ENCODE measurements at regions of chr11 and their contacts with region 1.

Region 1: GRCh38 chr11:122781378-122782195 is 56.7 kb upstream of the CRTAM start:
- DNase-seq: peak; percentile 42
- H3K4me3 ChIP-seq: no peak overlapping the region
- H3K27ac ChIP-seq: no peak overlapping the region
- H3K4me1 ChIP-seq: peaks cover 0 to 28% (median 5%) of the 10 kb centered on the region in 3 donors
- H3K27me3 ChIP-seq: no peaks in the 10 kb centered on the region
- CTCF ChIP-seq: peak; percentile 91 to 96 (median 94)
- POLR2A ChIP-seq: no peak

Region 2: DNA sequence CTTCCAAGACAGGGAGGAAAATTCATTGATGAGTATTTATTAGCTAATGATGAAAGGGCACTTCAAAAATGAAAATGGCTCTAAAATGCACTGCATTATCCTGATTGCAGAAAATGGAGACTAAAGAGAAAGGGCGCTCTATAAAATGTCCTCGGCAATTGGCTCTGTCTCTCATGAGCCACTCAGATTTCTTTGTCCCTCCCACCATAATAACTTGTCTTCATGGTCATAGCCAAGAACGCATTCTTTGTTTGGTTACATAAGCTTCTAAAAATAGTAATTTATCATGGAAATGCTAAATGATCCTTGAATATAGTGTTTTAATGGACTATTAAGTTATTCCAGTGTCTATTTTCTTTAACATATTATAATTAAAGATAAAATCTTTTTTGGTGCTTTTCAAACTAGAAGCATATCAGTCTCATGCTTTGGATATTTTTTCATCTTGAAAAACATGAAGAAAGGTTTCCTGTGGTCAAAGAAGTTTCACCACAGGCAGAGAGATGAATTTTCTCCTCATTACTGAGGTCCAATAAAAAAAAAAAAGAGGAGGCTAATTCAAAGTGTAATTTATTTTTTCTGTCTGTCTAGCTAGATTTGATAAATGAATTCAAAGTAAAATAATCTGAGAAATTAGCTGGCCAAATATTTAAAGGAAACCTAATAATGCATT is 427.4 kb before region 1 on chr11:
- intact Hi-C with region 1: no loop called
- DNase-seq: no peak
- H3K4me3 ChIP-seq: no peak overlapping the region
- H3K27ac ChIP-seq: no peak overlapping the region
- H3K4me1 ChIP-seq: no peaks in the 10 kb centered on the region
- H3K27me3 ChIP-seq: no peaks in the 10 kb centered on the region
- CTCF ChIP-seq: no peak
- POLR2A ChIP-seq: no peak

Region 3: GRCh38 chr11:122601141-122602125 is 180.2 kb before region 1 on chr11:
- intact Hi-C with region 1: no loop called
- DNase-seq: no peak
- H3K4me3 ChIP-seq: no peak overlapping the region
- H3K27ac ChIP-seq: peak overlapping the region in 1 of 4 donors; percentile 3
- H3K4me1 ChIP-seq: no peaks in the 10 kb centered on the region
- H3K27me3 ChIP-seq: peaks cover 0 to 8% (median 0%) of the 10 kb centered on the region in 4 donors
- CTCF ChIP-seq: no peak
- POLR2A ChIP-seq: no peak

Region 4: DNA sequence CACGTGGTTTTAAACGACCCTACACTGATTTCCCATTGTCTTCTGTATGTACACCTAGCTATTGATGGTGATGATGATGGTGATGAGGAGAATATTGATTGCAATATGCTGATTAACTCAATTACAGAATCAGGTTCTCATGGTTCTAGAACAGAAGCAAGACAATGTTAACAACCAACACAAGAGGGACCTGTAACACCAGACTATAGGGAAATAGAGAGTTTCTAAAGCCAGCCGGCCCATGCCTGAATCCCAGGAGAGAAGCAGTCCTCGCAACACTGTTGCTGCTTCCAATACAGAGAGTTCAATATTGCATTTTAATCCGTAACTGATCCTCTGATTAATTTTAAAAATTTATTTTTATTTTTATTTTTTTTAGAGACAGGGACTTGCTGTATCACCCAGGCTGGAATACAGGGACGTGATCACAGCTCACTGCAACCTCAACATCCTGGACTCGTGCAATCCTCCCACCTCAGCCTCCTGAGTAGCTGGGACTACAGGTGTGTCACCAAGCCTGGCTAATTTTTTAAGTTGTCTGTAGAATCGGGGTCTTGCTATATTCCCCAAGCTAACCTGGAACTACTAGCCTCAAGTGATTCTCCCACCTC is 148.3 kb before region 1 on chr11:
- intact Hi-C with region 1: loop called (anchors 5 kb)
- DNase-seq: no peak
- H3K4me3 ChIP-seq: no peak overlapping the region
- H3K27ac ChIP-seq: no peak overlapping the region
- H3K4me1 ChIP-seq: peaks cover 0 to 7% (median 0%) of the 10 kb centered on the region in 3 donors
- H3K27me3 ChIP-seq: peaks cover 0 to 7% (median 0%) of the 10 kb centered on the region in 4 donors
- CTCF ChIP-seq: peak in 4 of 6 experiments; percentile 32 to 66 (median 38)
- POLR2A ChIP-seq: no peak